ENCODE measurements at regions of chr5 and their contacts with region 1.

Region 1: DNA sequence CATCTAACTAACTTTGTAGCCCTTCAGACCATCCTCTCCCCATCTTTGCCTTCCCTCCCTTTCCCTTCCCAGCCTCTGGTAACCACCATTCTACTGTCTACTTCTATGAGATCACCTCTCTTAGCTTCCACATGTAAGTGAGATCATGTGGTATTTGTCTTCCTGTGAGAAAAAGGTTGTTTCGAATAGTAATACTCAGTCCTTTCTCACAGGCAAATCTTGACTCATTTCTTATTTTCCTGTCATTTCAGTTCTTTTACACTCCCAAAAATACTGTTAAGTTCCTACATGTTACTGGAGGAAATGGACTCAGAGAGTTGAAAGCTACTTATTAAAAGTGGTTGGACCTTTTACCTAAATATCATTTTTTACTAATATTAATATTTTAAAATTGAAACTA is 82.1 kb downstream of the SLF1 start:
- DNase-seq: no peak
- H3K4me3 Mint-ChIP-seq: no peak overlapping the region
- H3K27ac Mint-ChIP-seq: no peak overlapping the region
- H3K4me1 Mint-ChIP-seq: peaks cover 11% of the 10 kb centered on the region
- H3K27me3 Mint-ChIP-seq: no peaks in the 10 kb centered on the region

Region 2: DNA sequence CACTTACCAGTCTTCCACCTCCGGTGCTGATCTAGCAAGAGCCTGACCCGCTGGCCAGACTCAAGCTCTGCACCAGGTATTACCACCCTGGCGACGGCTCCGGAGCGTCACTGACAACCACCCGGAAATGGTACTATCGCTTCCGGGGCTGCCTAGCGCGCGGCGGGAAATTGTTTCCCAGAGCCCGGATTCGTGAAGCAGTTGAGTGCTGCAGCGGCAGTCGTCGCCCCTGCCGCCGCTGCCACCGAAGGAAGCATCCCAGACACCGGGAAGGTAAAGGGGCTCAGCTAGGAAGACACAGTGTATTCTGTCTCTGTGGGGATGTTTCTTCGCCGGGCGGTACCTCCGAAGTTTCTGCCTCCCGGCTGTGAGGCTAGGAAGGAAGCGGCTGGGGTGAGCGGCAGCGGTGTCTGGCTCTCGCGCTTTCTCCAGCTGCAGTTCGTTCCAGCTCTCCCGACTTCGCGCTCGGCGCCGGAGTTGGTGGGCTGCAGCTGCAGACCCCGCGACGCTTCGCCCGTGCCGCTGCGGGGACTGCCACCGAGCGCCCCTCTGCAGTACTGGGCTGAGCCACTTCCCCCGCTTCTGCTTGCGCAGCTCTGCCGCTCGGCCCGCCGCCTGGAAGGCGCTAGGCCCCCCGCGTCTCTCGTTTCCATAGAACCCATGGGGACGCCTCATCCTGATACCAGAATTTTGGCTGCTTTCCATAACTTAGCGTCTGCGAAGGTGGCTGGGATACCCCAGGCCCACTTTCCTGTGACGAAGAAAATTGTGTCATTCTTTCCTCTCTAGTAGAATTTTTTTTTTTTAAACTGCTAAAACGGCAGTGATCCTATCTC is 81.9 kb before region 1 on chr5 and contains the starts of genes KIAA0825 and SLF1:
- intact Hi-C with region 1: loop called (anchors 5 kb)
- DNase-seq: peak; percentile 83
- H3K4me3 Mint-ChIP-seq: peak within 1 kb of the TSS; percentile 97
- H3K27ac Mint-ChIP-seq: peak within 1 kb of the TSS; percentile 96
- H3K4me1 Mint-ChIP-seq: peaks cover 37% of the 10 kb centered on the region
- H3K27me3 Mint-ChIP-seq: no peaks in the 10 kb centered on the region
- total RNA-seq, gene KIAA0825: 0.32 and 0.62 TPM in 2 replicates
- total RNA-seq, gene SLF1: 12.7 and 13.7 TPM in 2 replicates